ENCODE measurements at regions of chr3 and their contacts with region 1.

Region 1: GRCh38 chr3:106423321-106424225 is 554.8 kb upstream of the CBLB start:
- DNase-seq: peak; percentile 59
- H3K4me3 Mint-ChIP-seq: peak overlapping the region; percentile 18
- H3K27ac Mint-ChIP-seq: peak overlapping the region; percentile 94
- H3K4me1 Mint-ChIP-seq: peaks cover 54% of the 10 kb centered on the region
- H3K27me3 Mint-ChIP-seq: no peaks in the 10 kb centered on the region

Region 2: GRCh38 chr3:105676621-105677300 is 746.8 kb before region 1 on chr3:
- CTCF ChIA-PET with region 1: no interaction called
- POLR2A ChIA-PET with region 1: no interaction called
- intact Hi-C with region 1: loop called (anchors 1 kb)
- DNase-seq: peak; percentile 77
- H3K4me3 Mint-ChIP-seq: no peak overlapping the region
- H3K27ac Mint-ChIP-seq: peak overlapping the region; percentile 86
- H3K4me1 Mint-ChIP-seq: peaks cover 9% of the 10 kb centered on the region
- H3K27me3 Mint-ChIP-seq: no peaks in the 10 kb centered on the region

Region 3: GRCh38 chr3:106004137-106004681 is 419.4 kb before region 1 on chr3:
- CTCF ChIA-PET with region 1: no interaction called
- POLR2A ChIA-PET with region 1: no interaction called
- intact Hi-C with region 1: loop called (anchors 2 kb)
- DNase-seq: no peak
- H3K4me3 Mint-ChIP-seq: peak overlapping the region; percentile 8
- H3K27ac Mint-ChIP-seq: peak overlapping the region; percentile 9
- H3K4me1 Mint-ChIP-seq: peaks cover 24% of the 10 kb centered on the region
- H3K27me3 Mint-ChIP-seq: no peaks in the 10 kb centered on the region

Region 4: GRCh38 chr3:106232956-106233355 is 190.6 kb before region 1 on chr3:
- CTCF ChIA-PET with region 1: no interaction called
- POLR2A ChIA-PET with region 1: no interaction called
- intact Hi-C with region 1: loop called (anchors 5 kb)
- DNase-seq: no peak
- H3K4me3 Mint-ChIP-seq: no peak overlapping the region
- H3K27ac Mint-ChIP-seq: no peak overlapping the region
- H3K4me1 Mint-ChIP-seq: peaks cover 42% of the 10 kb centered on the region
- H3K27me3 Mint-ChIP-seq: no peaks in the 10 kb centered on the region

Region 5: DNA sequence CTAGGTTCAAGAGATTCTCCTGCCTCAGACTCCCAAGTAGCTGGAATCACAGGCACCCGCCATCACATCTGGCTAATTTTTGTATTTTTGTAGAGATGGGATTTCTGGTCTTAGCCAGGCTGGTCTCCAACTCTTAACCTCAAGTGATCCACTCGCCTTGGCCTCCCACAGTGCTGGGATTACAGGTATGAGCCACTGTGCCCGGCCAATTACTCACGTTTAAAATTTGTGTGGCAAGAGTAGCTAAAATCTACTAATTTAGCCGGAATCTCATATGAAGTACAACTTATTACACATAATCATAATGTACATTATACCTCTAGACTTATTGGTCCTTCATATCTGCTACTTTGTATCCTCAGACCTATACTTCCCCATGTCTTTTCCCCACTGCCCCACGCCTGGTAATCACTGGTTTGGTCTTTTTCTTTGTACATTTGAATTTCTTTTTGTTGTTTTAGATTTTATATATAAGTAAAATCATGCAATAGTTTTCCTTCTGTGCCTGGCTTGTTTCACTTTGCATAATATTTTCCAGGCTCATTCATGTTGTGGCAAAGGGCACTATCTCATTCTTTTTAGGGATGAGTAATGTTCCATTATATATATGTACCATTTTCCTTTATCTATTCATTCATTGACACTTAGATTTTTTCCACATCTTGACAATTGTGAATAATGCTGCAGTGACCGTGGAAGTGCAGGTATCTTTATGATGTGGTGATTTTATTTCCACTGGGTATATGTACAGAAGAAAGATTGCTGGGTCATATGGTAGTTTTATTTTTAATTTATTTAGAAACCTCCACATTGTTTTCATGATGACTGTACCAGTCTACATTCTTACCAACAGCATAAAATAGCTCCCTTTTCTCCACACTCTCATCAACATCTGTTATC is 50.3 kb after region 1 on chr3:
- CTCF ChIA-PET with region 1: interaction called, 6 read pairs
- POLR2A ChIA-PET with region 1: interaction called, 16 read pairs
- intact Hi-C with region 1: loop called (anchors 1 kb)
- DNase-seq: peak; percentile 53
- H3K4me3 Mint-ChIP-seq: no peak overlapping the region
- H3K27ac Mint-ChIP-seq: peak overlapping the region; percentile 71
- H3K4me1 Mint-ChIP-seq: peaks cover 19% of the 10 kb centered on the region
- H3K27me3 Mint-ChIP-seq: no peaks in the 10 kb centered on the region

Region 6: DNA sequence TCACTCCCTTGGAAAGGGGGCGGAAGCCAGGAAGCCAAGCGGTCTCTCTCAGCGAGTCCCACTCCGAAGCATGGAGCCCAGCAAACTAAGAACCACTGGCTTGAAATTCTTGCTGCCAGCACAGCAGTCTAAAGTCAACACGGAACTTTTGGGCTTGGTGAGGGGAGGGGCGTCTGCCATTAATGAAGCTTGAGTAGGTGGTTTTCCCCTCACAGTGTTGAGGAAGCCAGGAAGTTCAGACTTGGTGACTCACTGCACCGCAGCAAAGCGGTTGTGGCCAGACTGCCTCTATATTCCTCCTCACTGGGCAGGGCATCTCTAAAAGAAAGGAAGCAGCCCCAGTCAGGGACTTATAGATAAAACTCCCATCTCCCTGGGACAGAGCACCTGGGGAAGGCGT is 110.6 kb after region 1 on chr3:
- CTCF ChIA-PET with region 1: no interaction called
- POLR2A ChIA-PET with region 1: no interaction called
- intact Hi-C with region 1: loop called (anchors 1 kb)
- DNase-seq: peak; percentile 81
- H3K4me3 Mint-ChIP-seq: peak overlapping the region; percentile 7
- H3K27ac Mint-ChIP-seq: peak overlapping the region; percentile 80
- H3K4me1 Mint-ChIP-seq: peaks cover 27% of the 10 kb centered on the region
- H3K27me3 Mint-ChIP-seq: no peaks in the 10 kb centered on the region

Region 7: GRCh38 chr3:106624154-106624553 is 200.6 kb after region 1 on chr3:
- CTCF ChIA-PET with region 1: no interaction called
- POLR2A ChIA-PET with region 1: no interaction called
- intact Hi-C with region 1: no loop called
- DNase-seq: no peak
- H3K4me3 Mint-ChIP-seq: no peak overlapping the region
- H3K27ac Mint-ChIP-seq: no peak overlapping the region
- H3K4me1 Mint-ChIP-seq: no peaks in the 10 kb centered on the region
- H3K27me3 Mint-ChIP-seq: peaks cover 2% of the 10 kb centered on the region